CD8-positive, alpha-beta T cell (primary cell): ENCODE measurements at regions of chr18 and their contacts with region 1.

Region 1: GRCh38 chr18:6270771-6271216 is 143.9 kb downstream of the L3MBTL4 start:
- DNase-seq: peak in 3 of 9 experiments; percentile 16 to 49 (median 24)
- ATAC-seq: no peak
- H3K4me3 ChIP-seq: no peak overlapping the region
- H3K4me3 Mint-ChIP-seq: no peak overlapping the region
- H3K27ac ChIP-seq: no peak overlapping the region
- H3K27ac Mint-ChIP-seq: no peak overlapping the region
- H3K4me1 ChIP-seq: no peaks in the 10 kb centered on the region
- H3K4me1 Mint-ChIP-seq: no peaks in the 10 kb centered on the region
- H3K27me3 ChIP-seq: no peaks in the 10 kb centered on the region
- H3K27me3 Mint-ChIP-seq: no peaks in the 10 kb centered on the region
- CTCF ChIP-seq: no peak

Region 2: GRCh38 chr18:6004683-6005082 is 266.1 kb before region 1 on chr18:
- CTCF ChIA-PET with region 1: no interaction called
- POLR2A ChIA-PET with region 1: no interaction called
- intact Hi-C with region 1: no loop called
- DNase-seq: no peak
- ATAC-seq: no peak
- H3K4me3 ChIP-seq: no peak overlapping the region
- H3K4me3 Mint-ChIP-seq: no peak overlapping the region
- H3K27ac ChIP-seq: no peak overlapping the region
- H3K27ac Mint-ChIP-seq: no peak overlapping the region
- H3K4me1 ChIP-seq: no peaks in the 10 kb centered on the region
- H3K4me1 Mint-ChIP-seq: no peaks in the 10 kb centered on the region
- H3K27me3 ChIP-seq: no peaks in the 10 kb centered on the region
- H3K27me3 Mint-ChIP-seq: peaks cover 2% of the 10 kb centered on the region
- CTCF ChIP-seq: no peak

Region 3: DNA sequence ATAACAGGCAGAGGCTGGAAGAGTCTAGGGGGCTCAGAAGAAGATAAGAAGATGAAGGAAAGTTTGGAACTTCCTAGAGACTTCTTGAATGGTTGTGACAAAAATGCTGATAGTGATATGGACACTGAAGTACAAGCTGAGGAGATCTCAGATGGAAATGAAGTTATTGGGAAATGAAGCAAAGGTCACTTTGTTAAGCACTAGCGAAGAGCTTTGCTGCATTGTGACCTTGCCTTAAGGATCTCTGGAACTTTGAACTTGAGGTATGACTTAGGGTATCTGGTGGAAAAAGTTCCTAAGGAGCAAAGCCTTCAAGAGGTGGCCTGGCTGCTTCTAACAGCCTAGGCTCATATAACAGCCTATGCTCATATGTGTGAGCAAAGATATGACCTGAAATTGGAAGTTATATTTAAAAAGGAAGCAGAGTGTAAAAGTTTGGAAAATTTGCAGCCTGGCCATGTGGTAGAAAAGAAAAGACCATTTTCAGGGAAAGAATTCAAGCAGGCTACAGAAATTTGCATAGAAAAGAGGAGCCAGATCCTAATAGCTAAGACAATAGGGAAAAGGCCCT is 52.6 kb after region 1 on chr18:
- CTCF ChIA-PET with region 1: no interaction called
- POLR2A ChIA-PET with region 1: no interaction called
- intact Hi-C with region 1: loop called in 1 of 2 experiments (anchors 5 kb)
- DNase-seq: no peak
- ATAC-seq: no peak
- H3K4me3 ChIP-seq: no peak overlapping the region
- H3K4me3 Mint-ChIP-seq: no peak overlapping the region
- H3K27ac ChIP-seq: no peak overlapping the region
- H3K27ac Mint-ChIP-seq: no peak overlapping the region
- H3K4me1 ChIP-seq: no peaks in the 10 kb centered on the region
- H3K4me1 Mint-ChIP-seq: no peaks in the 10 kb centered on the region
- H3K27me3 ChIP-seq: no peaks in the 10 kb centered on the region
- H3K27me3 Mint-ChIP-seq: no peaks in the 10 kb centered on the region
- CTCF ChIP-seq: no peak